Motor neuron (in vitro differentiated cells): ENCODE measurements at regions of chr1 and their contacts with region 1.

Region 1: GRCh38 chr1:166822385-166822784 is 16.9 kb upstream of the POGK start:
- ATAC-seq: no peak
- H3K4me3 ChIP-seq: no peak overlapping the region
- H3K27ac ChIP-seq: no peak overlapping the region
- H3K4me1 ChIP-seq: no peaks in the 10 kb centered on the region

Region 2: GRCh38 chr1:166080967-166081870 is 741.2 kb before region 1 on chr1:
- in situ Hi-C with region 1: no loop called
- ATAC-seq: peak in 2 of 8 experiments; percentile 25 to 62
- H3K4me3 ChIP-seq: no peak overlapping the region
- H3K27ac ChIP-seq: no peak overlapping the region
- H3K4me1 ChIP-seq: no peaks in the 10 kb centered on the region

Region 3: DNA sequence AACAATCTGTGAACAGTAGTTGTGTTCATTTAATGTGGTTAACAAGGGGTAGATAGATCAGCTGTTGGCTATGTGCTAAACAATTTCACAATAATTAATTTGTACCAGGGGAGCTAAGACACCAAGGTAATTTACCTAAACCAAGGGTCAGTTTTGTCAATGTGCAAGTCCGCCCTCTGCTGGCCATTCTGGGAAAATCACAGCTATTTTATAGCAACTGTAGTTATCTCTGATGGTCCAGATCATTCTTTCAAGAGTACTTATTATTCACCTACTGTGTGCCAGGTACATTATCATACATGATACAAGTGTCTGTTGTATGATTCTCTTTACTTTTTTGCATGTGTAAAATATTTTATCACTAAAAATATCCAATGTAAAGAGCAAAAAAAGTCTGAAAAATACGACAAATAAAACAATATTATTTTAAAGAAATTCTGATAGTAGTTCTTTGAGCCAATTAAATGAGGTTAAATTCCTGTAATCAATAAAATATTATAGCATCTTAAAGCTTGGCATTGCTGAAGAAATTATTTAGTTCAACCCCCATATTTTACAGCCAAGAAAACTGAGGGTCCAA is 343.2 kb before region 1 on chr1:
- in situ Hi-C with region 1: loop called in 1 of 9 experiments (anchors 25 kb)
- ATAC-seq: peak in 2 of 8 experiments; percentile 32 to 58
- H3K4me3 ChIP-seq: no peak overlapping the region
- H3K27ac ChIP-seq: no peak overlapping the region
- H3K4me1 ChIP-seq: no peaks in the 10 kb centered on the region